ENCODE measurements at regions of chr1 and their contacts with region 1.

Region 1: DNA sequence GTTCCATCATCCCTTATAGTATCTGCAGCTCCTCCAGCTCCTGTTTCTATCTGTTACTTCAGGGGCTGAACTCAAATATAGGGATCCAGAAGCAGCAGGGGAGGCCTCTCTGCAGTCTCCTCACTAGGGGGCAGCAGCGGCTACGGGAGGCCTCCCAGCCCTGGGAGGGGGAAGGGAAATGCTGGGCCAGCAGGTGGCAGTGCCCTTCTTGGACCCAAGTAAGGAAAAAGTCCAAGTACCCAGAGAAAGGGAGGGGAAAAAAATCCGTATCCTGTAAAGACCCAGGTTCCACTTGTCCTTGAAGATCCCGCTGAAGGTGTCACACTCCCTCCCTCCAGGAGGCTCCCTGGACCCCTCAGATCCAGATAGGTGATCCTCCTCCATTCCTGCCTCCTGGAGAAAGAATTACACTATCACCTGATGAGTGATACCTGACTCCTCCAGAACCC is 14.1 kb upstream of the NUAK2 start:
- DNase-seq: peak; percentile 65
- H3K4me3 Mint-ChIP-seq: no peak overlapping the region
- H3K27ac Mint-ChIP-seq: no peak overlapping the region
- H3K4me1 Mint-ChIP-seq: peaks cover 5% of the 10 kb centered on the region
- H3K27me3 Mint-ChIP-seq: peaks cover 39% of the 10 kb centered on the region

Region 2: DNA sequence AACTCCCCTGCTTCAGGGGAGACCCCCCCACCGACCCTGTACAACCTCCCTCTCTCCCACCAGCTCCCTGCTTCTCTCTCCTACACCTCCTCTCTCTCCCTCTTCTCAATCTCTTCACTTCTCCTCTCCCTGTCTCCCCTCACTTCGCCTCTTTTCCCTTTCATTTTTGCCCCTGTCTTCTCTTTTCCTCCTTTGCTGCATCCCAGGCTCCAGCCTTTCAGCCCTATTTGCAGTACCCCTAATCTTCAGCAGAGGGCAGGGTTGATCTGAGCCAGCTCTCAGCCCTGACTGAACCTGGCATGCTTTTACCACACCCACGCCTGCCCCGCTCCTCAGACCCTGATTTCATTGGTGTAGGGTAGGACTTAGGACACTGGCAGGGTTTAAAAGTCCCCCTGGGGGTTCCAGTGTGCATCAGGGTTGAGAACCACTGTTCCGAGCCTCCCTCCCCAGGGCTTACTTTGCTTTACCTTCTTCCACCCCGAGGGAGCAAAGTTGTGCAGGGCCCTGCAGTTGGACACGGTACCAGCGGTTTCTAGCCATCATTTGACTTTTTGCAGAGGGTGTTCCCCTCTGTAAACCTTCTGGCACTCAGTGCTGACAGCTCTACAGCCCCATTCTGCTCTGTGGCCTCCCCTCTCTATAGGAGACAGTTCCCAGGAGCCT is 360.0 kb before region 1 on chr1:
- intact Hi-C with region 1: loop called (anchors 10 kb)
- DNase-seq: peak; percentile 9
- H3K4me3 Mint-ChIP-seq: no peak overlapping the region
- H3K27ac Mint-ChIP-seq: no peak overlapping the region
- H3K4me1 Mint-ChIP-seq: no peaks in the 10 kb centered on the region
- H3K27me3 Mint-ChIP-seq: peaks cover 14% of the 10 kb centered on the region

Region 3: GRCh38 chr1:205321164-205321958 is 14.3 kb before region 1 on chr1 and contains the start of gene NUAK2:
- intact Hi-C with region 1: loop called (anchors 2 kb)
- DNase-seq: peak; percentile 78
- H3K4me3 Mint-ChIP-seq: peak within 1 kb of the TSS; percentile 95
- H3K27ac Mint-ChIP-seq: peak within 1 kb of the TSS; percentile 80
- H3K4me1 Mint-ChIP-seq: peaks cover 68% of the 10 kb centered on the region
- H3K27me3 Mint-ChIP-seq: peaks cover 8% of the 10 kb centered on the region
- total RNA-seq, gene NUAK2: 1.1 and 1.3 TPM in 2 replicates

Region 4: DNA sequence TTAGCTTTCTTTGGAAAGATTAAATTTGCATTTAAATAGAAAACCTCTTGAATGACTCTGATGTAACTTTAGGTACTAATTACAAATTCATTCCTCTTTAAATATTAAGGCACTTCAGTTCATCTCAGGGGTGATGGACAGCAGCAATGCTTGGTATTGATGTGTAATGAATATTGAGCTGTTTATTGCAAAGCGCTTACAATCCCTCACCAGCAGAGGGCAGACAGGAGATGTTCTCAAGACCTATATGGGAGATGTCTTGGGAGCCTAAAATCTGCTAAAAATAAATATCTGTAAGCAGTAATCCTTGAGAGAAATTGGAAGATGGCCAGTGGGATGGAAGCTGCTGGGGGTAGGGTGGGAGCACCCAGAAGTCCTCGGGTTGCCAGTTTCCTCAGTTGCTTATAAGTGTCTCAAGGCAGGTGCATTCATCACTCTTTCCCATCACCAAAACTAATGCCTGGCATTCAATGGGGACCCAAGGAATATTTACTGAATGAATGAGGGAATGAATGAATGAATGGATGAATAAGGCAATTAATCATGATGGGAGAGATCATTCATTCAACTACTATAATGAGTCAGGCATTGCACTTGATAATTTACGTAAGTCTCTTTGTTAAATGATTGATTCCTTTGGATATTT is 18.7 kb after region 1 on chr1:
- intact Hi-C with region 1: loop called (anchors 2 kb)
- DNase-seq: peak; percentile 27
- H3K4me3 Mint-ChIP-seq: no peak overlapping the region
- H3K27ac Mint-ChIP-seq: no peak overlapping the region
- H3K4me1 Mint-ChIP-seq: no peaks in the 10 kb centered on the region
- H3K27me3 Mint-ChIP-seq: peaks cover 19% of the 10 kb centered on the region

Region 5: GRCh38 chr1:205523891-205524793 is 188.5 kb after region 1 on chr1:
- intact Hi-C with region 1: loop called (anchors 1 kb)
- DNase-seq: peak; percentile 45
- H3K4me3 Mint-ChIP-seq: no peak overlapping the region
- H3K27ac Mint-ChIP-seq: no peak overlapping the region
- H3K4me1 Mint-ChIP-seq: no peaks in the 10 kb centered on the region
- H3K27me3 Mint-ChIP-seq: peaks cover 3% of the 10 kb centered on the region

Region 6: DNA sequence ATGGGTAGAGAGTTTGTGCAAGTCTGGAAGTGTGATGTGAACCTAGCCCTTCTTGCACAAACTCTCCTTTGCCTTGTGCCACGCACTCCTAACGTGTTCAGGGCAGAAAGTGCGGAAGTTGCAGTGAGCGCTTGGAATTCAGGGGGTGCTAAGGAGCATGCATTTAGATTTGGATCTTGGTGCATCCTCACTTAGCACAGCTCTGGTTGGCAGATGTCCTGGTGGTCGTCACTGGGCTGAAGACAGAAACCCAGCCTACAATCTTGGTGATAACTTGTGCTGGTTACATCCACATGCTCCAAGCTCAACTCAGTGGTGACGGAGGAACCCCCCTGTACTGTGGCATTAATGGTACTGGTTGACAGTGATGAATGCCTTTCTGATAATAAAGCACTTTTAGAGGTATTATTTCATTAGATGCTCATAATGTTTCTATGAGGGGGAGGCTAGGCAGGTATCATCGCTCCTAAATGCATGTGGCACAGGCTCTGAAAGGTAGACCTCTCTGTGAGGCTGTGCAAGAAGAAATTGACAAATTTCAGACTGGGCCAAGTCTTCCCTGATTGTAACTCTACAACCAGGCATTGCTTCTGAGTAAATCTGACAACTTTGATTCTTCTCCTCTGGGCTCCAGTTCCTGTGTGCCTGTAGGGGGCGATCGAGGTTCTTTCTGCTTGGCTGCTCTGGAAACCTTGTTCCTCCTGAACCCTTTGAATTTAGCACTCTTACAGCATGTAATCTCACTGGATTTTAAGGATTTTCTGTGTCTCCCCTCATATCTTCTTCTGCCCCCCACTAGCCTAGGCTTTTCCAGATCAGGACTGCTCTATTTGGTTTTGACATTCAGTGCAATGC is 1389.7 kb after region 1 on chr1:
- intact Hi-C with region 1: no loop called
- DNase-seq: peak; percentile 37
- H3K4me3 Mint-ChIP-seq: no peak overlapping the region
- H3K27ac Mint-ChIP-seq: peak overlapping the region; percentile 7
- H3K4me1 Mint-ChIP-seq: peaks cover 63% of the 10 kb centered on the region
- H3K27me3 Mint-ChIP-seq: no peaks in the 10 kb centered on the region

Measured in activated T-helper 1 cell treated with anti-CD3 and anti-CD28 coated beads, Interleukin-12 subunit alpha, Interleukin-12 subunit beta, Interleukin-2, Interleukin-4 antibody, amounts not matched to agents 30 ng/mL and 10 ng/mL and 1 ng/mL, durations not matched to agents 14 hours and 24 hours and 36 hours (primary cell).